HEK293 (cell line): ENCODE measurements at regions of chr14 and their contacts with region 1.

Region 1: GRCh38 chr14:21092273-21093011 is 6.0 kb downstream of the ZNF219 start:
- H3K4me3 ChIP-seq: no peak overlapping the region
- H3K27ac ChIP-seq: no peak overlapping the region
- H3K4me1 ChIP-seq: peaks cover 8% of the 10 kb centered on the region; the same call in 1 of the 2 replicates
- CTCF ChIP-seq: peak; percentile 98

Region 2: DNA sequence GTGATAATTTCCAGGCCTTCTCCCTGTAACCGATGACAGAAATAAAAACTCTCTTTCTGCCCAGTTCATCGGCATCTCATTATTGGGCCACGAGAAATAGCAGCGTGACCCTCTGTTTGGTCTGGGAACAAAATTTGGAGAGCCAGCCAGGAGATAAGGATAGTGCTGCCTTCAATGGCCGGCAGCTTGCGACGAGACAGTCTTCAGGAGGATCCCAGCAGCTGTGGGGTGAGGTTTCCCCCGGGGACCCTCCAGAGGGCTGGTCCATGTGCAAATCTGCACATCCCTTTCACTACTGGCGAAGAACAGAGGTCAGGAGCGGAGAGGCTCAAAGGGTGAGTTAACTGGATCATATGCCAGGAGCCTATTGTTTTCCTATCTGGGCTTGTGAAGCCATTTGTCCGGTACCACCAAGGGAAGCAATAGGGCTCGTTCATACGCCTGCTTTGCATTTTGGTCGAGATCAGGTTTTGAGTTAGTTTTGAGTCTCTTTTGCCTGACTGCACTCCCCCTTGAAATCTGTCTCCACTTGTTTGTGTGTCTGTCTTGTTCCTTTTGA is 88.6 kb before region 1 on chr14:
- CTCF ChIA-PET with region 1: interaction called, 16 read pairs
- POLR2A ChIA-PET with region 1: no interaction called
- H3K4me3 ChIP-seq: no peak overlapping the region
- H3K27ac ChIP-seq: no peak overlapping the region
- H3K4me1 ChIP-seq: no peaks in the 10 kb centered on the region
- CTCF ChIP-seq: no peak

Region 3: DNA sequence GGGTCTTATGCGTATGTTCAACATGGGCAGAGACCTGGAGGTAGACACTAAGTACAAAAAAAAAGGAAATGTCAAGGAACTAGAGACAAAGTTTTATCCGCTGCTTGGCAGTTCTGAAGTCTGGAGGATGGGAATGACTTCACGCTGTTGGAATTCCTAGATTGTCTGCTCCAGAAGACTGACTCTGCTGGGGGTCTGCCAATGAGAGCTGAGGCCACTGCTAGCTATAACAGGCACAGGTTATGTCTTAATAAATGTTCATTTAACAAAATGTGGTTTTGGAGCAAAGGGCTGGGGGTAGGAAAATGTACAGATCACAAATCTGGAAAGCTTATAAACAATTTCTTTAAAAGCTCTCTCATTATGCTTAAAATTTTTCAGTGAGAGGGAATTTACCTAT is 29.0 kb before region 1 on chr14:
- CTCF ChIA-PET with region 1: interaction called, 64 read pairs
- POLR2A ChIA-PET with region 1: interaction called, 8 read pairs
- H3K4me3 ChIP-seq: no peak overlapping the region
- H3K27ac ChIP-seq: no peak overlapping the region
- H3K4me1 ChIP-seq: no peaks in the 10 kb centered on the region; the same call in 1 of the 2 replicates
- CTCF ChIP-seq: no peak

Region 4: DNA sequence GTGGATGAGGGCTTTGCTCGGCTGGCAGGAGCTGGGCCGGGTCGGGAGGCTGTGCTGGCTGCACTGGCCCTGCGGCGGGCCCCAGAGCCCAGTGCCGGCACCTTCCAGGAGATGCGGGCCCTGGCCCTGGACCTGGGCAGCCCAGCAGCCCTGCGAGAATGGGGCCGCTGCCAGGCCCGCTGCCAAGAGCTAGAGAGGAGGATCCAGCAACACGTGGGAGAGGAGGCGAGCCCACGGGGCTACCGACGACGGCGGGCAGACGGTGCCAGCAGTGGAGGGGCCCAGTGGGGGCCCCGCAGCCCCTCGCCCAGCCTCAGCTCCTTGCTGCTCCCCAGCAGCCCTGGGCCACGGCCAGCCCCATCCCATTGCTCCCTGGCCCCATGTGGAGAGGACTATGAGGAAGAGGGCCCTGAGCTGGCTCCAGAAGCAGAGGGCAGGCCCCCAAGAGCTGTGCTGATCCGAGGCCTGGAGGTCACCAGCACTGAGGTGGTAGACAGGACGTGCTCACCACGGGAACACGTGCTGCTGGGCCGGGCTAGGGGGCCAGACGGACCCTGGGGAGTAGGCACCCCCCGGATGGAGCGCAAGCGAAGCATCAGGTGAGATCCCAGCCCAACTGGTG is 10.8 kb before region 1 on chr14:
- CTCF ChIA-PET with region 1: interaction called, 16 read pairs
- POLR2A ChIA-PET with region 1: interaction called, 5 read pairs
- H3K4me3 ChIP-seq: no peak overlapping the region
- H3K27ac ChIP-seq: no peak overlapping the region
- H3K4me1 ChIP-seq: no peaks in the 10 kb centered on the region
- CTCF ChIP-seq: no peak

Region 5: GRCh38 chr14:21109377-21110260 is 17.2 kb after region 1 on chr14:
- CTCF ChIA-PET with region 1: interaction called, 175 read pairs
- POLR2A ChIA-PET with region 1: interaction called, 9 read pairs
- H3K4me3 ChIP-seq: no peak overlapping the region
- H3K27ac ChIP-seq: no peak overlapping the region
- H3K4me1 ChIP-seq: peaks cover 9% of the 10 kb centered on the region
- CTCF ChIP-seq: no peak